CD8-positive, alpha-beta T cell (primary cell): ENCODE measurements at regions of chr3 and their contacts with region 1.

Region 1: DNA sequence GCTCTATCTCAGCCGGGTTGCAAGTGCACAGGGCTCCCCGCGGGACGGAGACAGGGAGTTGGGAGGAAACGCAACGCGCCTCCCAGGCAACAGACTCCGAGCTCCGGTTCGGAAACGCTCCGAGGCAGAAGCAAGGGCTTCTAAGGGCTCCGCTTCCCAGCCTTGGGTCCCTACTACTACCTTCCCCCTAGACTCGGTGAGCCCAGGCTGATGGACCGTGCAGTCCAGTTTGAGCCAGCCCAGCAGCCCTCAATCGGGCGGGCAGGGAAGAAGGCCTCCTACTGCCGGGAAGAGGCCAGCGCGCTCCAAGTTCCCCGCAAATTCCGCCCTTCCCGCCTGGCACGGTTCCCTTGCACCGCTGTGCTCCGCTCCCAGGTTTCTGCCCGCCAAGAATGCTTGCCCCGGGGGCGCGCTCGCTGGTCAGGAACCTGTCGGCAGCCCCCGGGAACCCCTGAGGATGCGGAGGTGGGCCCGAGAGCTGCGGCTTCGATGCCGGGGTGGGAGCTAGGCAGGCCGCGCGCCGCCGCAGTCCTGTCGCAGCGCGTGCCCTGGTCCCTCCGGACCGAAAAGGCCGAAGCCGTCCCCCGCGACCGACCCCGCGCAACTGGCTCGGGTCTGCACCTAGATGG is 728 bp downstream of the TRANK1 start:
- DNase-seq: peak in 7 of 9 experiments; percentile 27 to 66 (median 40)
- ATAC-seq: peak; percentile 34
- H3K4me3 ChIP-seq: peak overlapping the region; percentile 79 to 82
- H3K4me3 Mint-ChIP-seq: peak overlapping the region; percentile 83
- H3K27ac ChIP-seq: peak overlapping the region; percentile 22 to 68
- H3K27ac Mint-ChIP-seq: peak overlapping the region; percentile 82
- H3K4me1 ChIP-seq: peaks cover 13% of the 10 kb centered on the region
- H3K4me1 Mint-ChIP-seq: peaks cover 23% of the 10 kb centered on the region
- H3K27me3 ChIP-seq: no peaks in the 10 kb centered on the region
- H3K27me3 Mint-ChIP-seq: no peaks in the 10 kb centered on the region
- CTCF ChIP-seq: no peak

Region 2: GRCh38 chr3:36434687-36435426 is 509.3 kb before region 1 on chr3:
- CTCF ChIA-PET with region 1: no interaction called
- POLR2A ChIA-PET with region 1: no interaction called
- intact Hi-C with region 1: no loop called
- DNase-seq: no peak
- ATAC-seq: no peak
- H3K4me3 ChIP-seq: no peak overlapping the region
- H3K4me3 Mint-ChIP-seq: no peak overlapping the region
- H3K27ac ChIP-seq: no peak overlapping the region
- H3K27ac Mint-ChIP-seq: no peak overlapping the region
- H3K4me1 ChIP-seq: no peaks in the 10 kb centered on the region
- H3K4me1 Mint-ChIP-seq: no peaks in the 10 kb centered on the region
- H3K27me3 ChIP-seq: no peaks in the 10 kb centered on the region
- H3K27me3 Mint-ChIP-seq: no peaks in the 10 kb centered on the region
- CTCF ChIP-seq: no peak

Region 3: GRCh38 chr3:36688815-36689214 is 255.3 kb before region 1 on chr3:
- CTCF ChIA-PET with region 1: no interaction called
- POLR2A ChIA-PET with region 1: no interaction called
- intact Hi-C with region 1: no loop called
- DNase-seq: no peak
- ATAC-seq: no peak
- H3K4me3 ChIP-seq: no peak overlapping the region
- H3K4me3 Mint-ChIP-seq: no peak overlapping the region
- H3K27ac ChIP-seq: no peak overlapping the region
- H3K27ac Mint-ChIP-seq: no peak overlapping the region
- H3K4me1 ChIP-seq: no peaks in the 10 kb centered on the region
- H3K4me1 Mint-ChIP-seq: no peaks in the 10 kb centered on the region
- H3K27me3 ChIP-seq: no peaks in the 10 kb centered on the region
- H3K27me3 Mint-ChIP-seq: no peaks in the 10 kb centered on the region
- CTCF ChIP-seq: no peak

Region 4: DNA sequence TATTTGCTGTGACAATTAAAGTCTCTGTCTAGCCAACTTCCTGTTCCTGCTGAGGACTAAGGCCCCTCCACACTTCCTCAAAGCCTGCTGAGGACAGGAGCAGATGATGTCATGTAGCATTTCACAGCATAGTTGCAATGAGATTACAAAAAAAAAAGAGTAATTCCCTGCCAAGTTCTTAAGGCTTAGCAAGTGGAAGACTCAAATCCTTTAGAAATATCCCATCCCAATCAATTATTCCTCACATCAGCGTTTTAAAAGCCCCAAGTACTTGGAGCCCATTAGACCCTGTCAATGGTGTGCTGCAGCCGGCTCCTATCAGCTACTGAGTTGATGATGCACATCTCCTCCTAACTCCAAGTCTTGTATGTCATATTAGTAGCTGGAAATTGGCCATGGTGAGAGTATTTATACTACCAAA is 51.0 kb before region 1 on chr3:
- CTCF ChIA-PET with region 1: no interaction called
- POLR2A ChIA-PET with region 1: interaction called, 10 read pairs
- intact Hi-C with region 1: no loop called
- DNase-seq: peak in 4 of 9 experiments; percentile 26 to 84 (median 70)
- ATAC-seq: peak; percentile 95
- H3K4me3 ChIP-seq: no peak overlapping the region
- H3K4me3 Mint-ChIP-seq: peak overlapping the region; percentile 26
- H3K27ac ChIP-seq: peak overlapping the region; percentile 28 to 68
- H3K27ac Mint-ChIP-seq: peak overlapping the region; percentile 92
- H3K4me1 ChIP-seq: peaks cover 41% of the 10 kb centered on the region
- H3K4me1 Mint-ChIP-seq: peaks cover 55% of the 10 kb centered on the region
- H3K27me3 ChIP-seq: no peaks in the 10 kb centered on the region
- H3K27me3 Mint-ChIP-seq: no peaks in the 10 kb centered on the region
- CTCF ChIP-seq: no peak

Region 5: GRCh38 chr3:36988356-36988755 is 44.2 kb after region 1 on chr3:
- CTCF ChIA-PET with region 1: no interaction called
- POLR2A ChIA-PET with region 1: interaction called, 22 read pairs
- intact Hi-C with region 1: loop called (anchors 1 to 2 kb)
- DNase-seq: peak in 2 of 9 experiments; percentile 23 to 49
- ATAC-seq: no peak
- H3K4me3 ChIP-seq: no peak overlapping the region
- H3K4me3 Mint-ChIP-seq: peak overlapping the region; percentile 57
- H3K27ac ChIP-seq: peak overlapping the region in 1 of 2 experiments; percentile 13
- H3K27ac Mint-ChIP-seq: peak overlapping the region; percentile 64
- H3K4me1 ChIP-seq: peaks cover 46% of the 10 kb centered on the region
- H3K4me1 Mint-ChIP-seq: peaks cover 38% of the 10 kb centered on the region
- H3K27me3 ChIP-seq: no peaks in the 10 kb centered on the region
- H3K27me3 Mint-ChIP-seq: no peaks in the 10 kb centered on the region
- CTCF ChIP-seq: no peak

Region 6: GRCh38 chr3:36993326-36994283 is 49.5 kb after region 1 on chr3 and contains the start of gene MLH1:
- CTCF ChIA-PET with region 1: no interaction called
- POLR2A ChIA-PET with region 1: interaction called, 22 read pairs
- intact Hi-C with region 1: loop called (anchors 1 to 2 kb)
- DNase-seq: peak in 8 of 9 experiments; percentile 95 to 100 (median 97)
- ATAC-seq: peak; percentile 81
- H3K4me3 ChIP-seq: peak within 1 kb of the TSS; percentile 58 to 77
- H3K4me3 Mint-ChIP-seq: no peak within 1 kb of the TSS
- H3K27ac ChIP-seq: peak within 1 kb of the TSS; percentile 89 to 99
- H3K27ac Mint-ChIP-seq: no peak within 1 kb of the TSS
- H3K4me1 ChIP-seq: peaks cover 44% of the 10 kb centered on the region
- H3K4me1 Mint-ChIP-seq: peaks cover 35% of the 10 kb centered on the region
- H3K27me3 ChIP-seq: no peaks in the 10 kb centered on the region
- H3K27me3 Mint-ChIP-seq: no peaks in the 10 kb centered on the region
- CTCF ChIP-seq: no peak
- total RNA-seq, gene MLH1: 21.4 to 23.9 TPM